Transverse colon (tissue), 4 donors: ENCODE measurements at regions of chr3 and their contacts with region 1.

Region 1: GRCh38 chr3:42961633-42962032 is 17.5 kb upstream of the GASK1A start:
- DNase-seq: peak; percentile 37
- H3K4me3 ChIP-seq: no peak overlapping the region
- H3K27ac ChIP-seq: no peak overlapping the region
- H3K4me1 ChIP-seq: peaks cover 0 to 3% (median 0%) of the 10 kb centered on the region in 4 donors
- H3K27me3 ChIP-seq: no peaks in the 10 kb centered on the region
- CTCF ChIP-seq: peak; percentile 62 to 69 (median 66)
- EP300 ChIP-seq: no peak
- POLR2A ChIP-seq: no peak

Region 2: GRCh38 chr3:43155464-43156121 is 194.0 kb after region 1 on chr3:
- in situ Hi-C with region 1: loop called in 2 of 4 experiments (anchors 10 kb)
- intact Hi-C with region 1: loop called (anchors 2 kb)
- DNase-seq: peak; percentile 49
- H3K4me3 ChIP-seq: no peak overlapping the region
- H3K27ac ChIP-seq: no peak overlapping the region
- H3K4me1 ChIP-seq: peaks cover 0 to 5% (median 2%) of the 10 kb centered on the region in 4 donors
- H3K27me3 ChIP-seq: peaks cover 15% of the 10 kb centered on the region
- CTCF ChIP-seq: peak; percentile 48 to 72 (median 55)
- EP300 ChIP-seq: no peak
- POLR2A ChIP-seq: no peak

Region 3: GRCh38 chr3:43497905-43498365 is 536.3 kb after region 1 on chr3:
- in situ Hi-C with region 1: loop called in 3 of 4 experiments (anchors 10 to 25 kb)
- intact Hi-C with region 1: no loop called
- DNase-seq: no peak
- H3K4me3 ChIP-seq: no peak overlapping the region
- H3K27ac ChIP-seq: no peak overlapping the region
- H3K4me1 ChIP-seq: no peaks in the 10 kb centered on the region
- H3K27me3 ChIP-seq: no peaks in the 10 kb centered on the region
- CTCF ChIP-seq: no peak
- EP300 ChIP-seq: no peak
- POLR2A ChIP-seq: no peak

Region 4: DNA sequence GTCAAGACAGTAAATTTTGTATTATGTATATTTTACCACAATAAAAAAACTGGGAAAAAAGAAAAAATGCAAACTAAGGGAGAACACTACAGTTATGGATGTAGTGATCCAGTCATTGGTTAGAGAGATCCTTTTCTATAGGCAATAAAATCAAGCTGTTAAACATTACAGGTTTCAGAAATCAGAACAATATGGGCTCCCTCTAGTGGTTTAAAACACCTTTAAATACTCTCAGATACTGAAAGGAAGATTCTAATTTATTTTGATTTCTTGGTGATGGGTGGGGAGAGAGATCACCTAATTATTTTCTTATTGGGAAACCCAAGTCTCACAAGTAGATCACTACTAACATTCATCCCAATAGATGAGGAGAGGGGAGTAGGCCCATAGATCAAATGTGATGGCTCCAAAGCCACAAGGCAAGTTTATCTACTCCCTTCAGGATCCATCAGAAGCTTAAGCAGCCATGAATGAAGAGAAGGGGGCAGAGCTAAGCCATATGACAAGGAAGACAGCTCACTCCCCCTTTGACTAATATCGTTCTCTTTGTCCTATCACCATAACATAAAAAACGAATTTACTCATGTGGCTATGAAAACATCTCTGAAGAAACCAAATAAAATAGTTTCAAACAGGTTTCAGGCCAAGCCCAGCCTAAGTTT is 541.6 kb after region 1 on chr3:
- in situ Hi-C with region 1: loop called in 3 of 4 experiments (anchors 10 to 25 kb)
- intact Hi-C with region 1: no loop called
- DNase-seq: no peak
- H3K4me3 ChIP-seq: no peak overlapping the region
- H3K27ac ChIP-seq: no peak overlapping the region
- H3K4me1 ChIP-seq: no peaks in the 10 kb centered on the region
- H3K27me3 ChIP-seq: no peaks in the 10 kb centered on the region
- CTCF ChIP-seq: peak; percentile 43 to 56 (median 49)
- EP300 ChIP-seq: no peak
- POLR2A ChIP-seq: no peak